Activated naive CD8-positive, alpha-beta T cell treated with anti-CD3 and anti-CD28 coated beads, Interleukin-2, amount 10 ng/mL, durations not matched to agents 7 days and 5 days (primary cell): ENCODE measurements at regions of chr1 and their contacts with region 1.

Region 1: DNA sequence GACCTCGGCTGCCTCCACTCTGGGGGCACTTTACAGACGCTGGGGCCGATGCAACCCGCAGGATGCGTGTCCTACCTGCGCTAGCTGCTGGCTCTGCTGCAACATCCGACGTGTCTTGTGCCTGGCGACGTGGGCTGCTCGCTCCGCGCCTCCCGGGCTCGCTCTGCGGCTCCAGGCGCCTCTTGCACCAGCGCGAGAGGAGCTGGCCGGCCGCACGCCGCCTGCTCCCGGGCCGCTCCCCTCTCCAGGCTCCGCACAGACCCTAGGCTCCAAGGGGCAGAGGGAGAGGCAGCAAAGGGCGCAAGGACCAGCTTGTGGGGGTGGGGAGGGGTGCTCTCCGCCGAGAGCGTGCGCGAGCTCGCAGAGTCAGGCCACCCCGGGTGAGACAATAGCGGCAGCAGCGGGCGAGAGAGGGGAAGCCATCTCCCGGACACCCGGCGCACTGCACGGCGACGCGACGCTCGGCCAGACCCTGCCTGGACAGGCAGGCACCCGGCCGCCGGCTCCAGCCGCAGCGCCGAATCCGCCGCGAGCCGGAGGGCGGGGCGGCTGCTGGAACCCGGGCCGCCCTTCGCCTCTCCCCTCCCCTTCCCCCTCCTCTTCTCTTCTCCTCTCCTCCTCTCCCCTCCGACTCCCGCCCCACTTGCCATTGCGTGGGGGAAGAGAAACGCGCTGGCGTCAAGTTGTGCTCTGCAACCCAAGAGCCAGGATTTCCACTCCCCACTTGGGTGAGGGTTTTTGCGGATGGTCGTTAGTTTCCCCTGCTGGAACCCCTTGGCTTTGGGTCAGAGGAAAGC is at the start of gene PIK3C2B:
- DNase-seq: peak; percentile 83
- ATAC-seq: peak; percentile 78
- H3K4me3 Mint-ChIP-seq: peak within 1 kb of the TSS; percentile 95
- H3K27ac Mint-ChIP-seq: peak within 1 kb of the TSS; percentile 91
- H3K4me1 Mint-ChIP-seq: peaks cover 44% of the 10 kb centered on the region
- H3K27me3 Mint-ChIP-seq: no peaks in the 10 kb centered on the region
- total RNA-seq, gene PIK3C2B: 37.1 to 41.8 TPM

Region 2: GRCh38 chr1:204398217-204399081 is 96.0 kb before region 1 on chr1:
- POLR2A ChIA-PET with region 1: no interaction called
- DNase-seq: peak; percentile 42
- ATAC-seq: peak; percentile 85
- H3K4me3 Mint-ChIP-seq: no peak overlapping the region
- H3K27ac Mint-ChIP-seq: peak overlapping the region; percentile 6
- H3K4me1 Mint-ChIP-seq: peaks cover 4% of the 10 kb centered on the region
- H3K27me3 Mint-ChIP-seq: no peaks in the 10 kb centered on the region

Region 3: GRCh38 chr1:204446370-204447111 is 47.9 kb before region 1 on chr1:
- POLR2A ChIA-PET with region 1: interaction called, 37 read pairs
- DNase-seq: peak; percentile 75
- ATAC-seq: peak; percentile 95
- H3K4me3 Mint-ChIP-seq: no peak overlapping the region
- H3K27ac Mint-ChIP-seq: peak overlapping the region; percentile 80
- H3K4me1 Mint-ChIP-seq: peaks cover 11% of the 10 kb centered on the region
- H3K27me3 Mint-ChIP-seq: no peaks in the 10 kb centered on the region

Region 4: DNA sequence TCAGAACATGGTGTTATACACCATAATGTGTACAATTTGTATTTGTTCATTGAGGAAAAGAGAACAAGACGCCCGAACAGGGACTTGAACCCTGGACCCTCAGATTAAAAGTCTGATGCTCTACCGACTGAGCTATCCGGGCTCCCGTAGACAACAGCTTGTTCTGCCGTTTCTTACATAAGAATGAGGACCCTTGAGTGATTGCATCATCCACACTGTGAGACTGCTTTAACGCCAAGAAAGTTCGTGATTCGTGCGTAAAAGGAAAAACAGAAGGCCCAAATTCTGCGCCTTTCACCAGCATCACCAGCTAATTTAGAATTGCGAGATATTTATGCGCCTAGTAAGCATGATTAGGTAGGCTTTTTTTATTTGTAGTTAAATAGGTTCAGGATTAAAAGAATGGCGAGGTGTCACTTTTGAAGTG is 12.5 kb after region 1 on chr1:
- POLR2A ChIA-PET with region 1: interaction called, 41 read pairs
- DNase-seq: peak; percentile 72
- ATAC-seq: peak; percentile 62
- H3K4me3 Mint-ChIP-seq: peak overlapping the region; percentile 89
- H3K27ac Mint-ChIP-seq: peak overlapping the region; percentile 98
- H3K4me1 Mint-ChIP-seq: peaks cover 28% of the 10 kb centered on the region
- H3K27me3 Mint-ChIP-seq: peaks cover 2% of the 10 kb centered on the region